ENCODE measurements at regions of chr2 and their contacts with region 1.

Region 1: DNA sequence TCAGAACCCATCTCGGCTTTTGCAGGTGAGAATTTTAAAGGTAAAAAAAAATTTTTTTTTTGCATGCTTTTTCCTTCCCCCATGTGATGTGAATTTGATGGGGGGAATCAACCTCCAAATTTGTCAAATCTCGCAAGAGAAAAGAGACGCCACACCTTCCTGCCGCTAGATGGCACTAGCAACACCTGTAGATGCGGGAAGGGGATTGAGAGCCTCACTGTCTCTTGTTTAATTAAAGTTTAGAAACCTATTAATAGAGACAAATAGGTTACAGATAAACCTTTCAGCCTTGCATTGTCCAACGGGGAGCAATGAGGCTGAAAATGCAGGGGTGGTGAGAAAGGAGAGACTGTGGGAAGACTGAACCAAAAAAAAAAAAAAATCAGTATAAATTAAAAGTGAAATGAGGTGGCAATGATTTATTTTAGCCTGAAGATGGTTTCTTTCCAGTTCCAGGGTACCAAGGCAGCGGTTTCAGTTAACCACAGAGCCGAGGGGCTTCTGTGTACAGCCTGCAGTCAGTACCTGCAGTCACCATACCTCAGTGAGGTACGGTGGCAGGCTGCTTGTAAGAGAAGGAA is 84.6 kb downstream of the NRP2 start:
- DNase-seq: peak; percentile 66
- H3K4me3 ChIP-seq: no peak overlapping the region
- H3K27ac ChIP-seq: no peak overlapping the region
- H3K4me1 ChIP-seq: peaks cover 28% of the 10 kb centered on the region
- H3K27me3 ChIP-seq: no peaks in the 10 kb centered on the region
- CTCF ChIP-seq: peak; percentile 79 to 86
- POLR2A ChIP-seq: no peak

Region 2: GRCh38 chr2:205808486-205809121 is 41.7 kb after region 1 on chr2:
- CTCF ChIA-PET with region 1: interaction called, 4 read pairs
- POLR2A ChIA-PET with region 1: no interaction called
- dilution Hi-C with region 1: no loop called
- intact Hi-C with region 1: loop called (anchors 2 kb)
- DNase-seq: no peak
- H3K4me3 ChIP-seq: no peak overlapping the region
- H3K27ac ChIP-seq: no peak overlapping the region
- H3K4me1 ChIP-seq: no peaks in the 10 kb centered on the region
- H3K27me3 ChIP-seq: peaks cover 0 to 10% of the 10 kb centered on the region in 2 experiments
- CTCF ChIP-seq: no peak
- POLR2A ChIP-seq: no peak

Region 3: DNA sequence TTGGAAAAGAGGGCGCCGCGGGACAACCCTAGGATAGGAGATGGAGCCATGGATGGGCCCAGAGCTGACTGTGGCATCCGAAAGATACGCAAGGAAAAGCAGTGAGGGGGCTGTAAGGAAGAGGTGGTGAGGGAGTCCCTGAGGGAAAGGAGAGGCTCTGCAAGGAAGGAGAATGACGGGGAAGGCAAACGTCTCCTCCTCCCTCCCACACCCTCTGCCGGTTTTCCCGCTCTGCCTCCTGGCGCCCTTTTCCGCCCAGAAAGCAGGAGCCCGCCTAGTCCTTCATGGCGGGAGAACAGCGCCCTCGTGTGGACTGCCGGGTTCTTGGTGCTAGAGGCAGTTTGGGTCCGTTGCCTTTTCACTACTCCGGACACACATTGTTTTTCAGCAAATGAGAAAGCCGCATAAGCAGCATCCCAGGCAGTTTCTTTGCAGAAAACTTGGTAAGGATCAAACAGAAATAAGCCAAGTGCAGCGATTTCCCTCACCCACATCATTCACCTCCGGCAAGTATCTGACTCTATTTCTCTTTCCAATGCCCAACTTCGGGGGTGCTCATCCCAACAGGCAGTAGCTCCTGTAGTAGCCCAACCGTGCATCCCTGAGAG is 118.7 kb after region 1 on chr2:
- CTCF ChIA-PET with region 1: interaction called, 4 read pairs
- POLR2A ChIA-PET with region 1: no interaction called
- dilution Hi-C with region 1: no loop called
- intact Hi-C with region 1: loop called (anchors 1 kb)
- DNase-seq: peak; percentile 76
- H3K4me3 ChIP-seq: no peak overlapping the region
- H3K27ac ChIP-seq: no peak overlapping the region
- H3K4me1 ChIP-seq: peaks cover 5% of the 10 kb centered on the region
- H3K27me3 ChIP-seq: peaks cover 0 to 2% of the 10 kb centered on the region in 2 experiments
- CTCF ChIP-seq: peak; percentile 90 to 93
- POLR2A ChIP-seq: no peak

Region 4: DNA sequence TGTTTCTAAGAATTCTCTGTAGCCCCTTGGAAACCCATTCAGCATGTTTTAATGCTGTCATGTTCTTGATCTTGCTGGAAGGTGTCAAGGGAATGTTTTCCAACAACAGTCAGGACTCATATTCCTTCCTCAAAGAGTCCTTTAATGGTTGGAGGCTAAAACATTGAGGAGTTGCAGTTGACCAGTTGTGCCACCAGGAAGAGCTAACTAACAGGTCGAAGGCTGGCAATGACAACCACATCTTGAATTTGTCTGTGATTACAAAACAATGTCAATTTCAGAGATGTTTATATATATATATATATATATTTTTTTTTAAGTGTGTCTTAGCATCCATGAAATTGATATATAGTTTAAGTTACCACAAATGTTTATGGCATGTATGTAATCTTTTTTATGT is 167.6 kb after region 1 on chr2:
- CTCF ChIA-PET with region 1: no interaction called
- POLR2A ChIA-PET with region 1: no interaction called
- dilution Hi-C with region 1: no loop called
- intact Hi-C with region 1: loop called (anchors 1 kb)
- DNase-seq: no peak
- H3K4me3 ChIP-seq: no peak overlapping the region
- H3K27ac ChIP-seq: no peak overlapping the region
- H3K4me1 ChIP-seq: peaks cover 19% of the 10 kb centered on the region
- H3K27me3 ChIP-seq: no peaks in the 10 kb centered on the region
- CTCF ChIP-seq: no peak
- POLR2A ChIP-seq: no peak

Measured in endothelial cell of umbilical vein (primary cell).